ENCODE measurements at regions of chr5 and their contacts with region 1.

Region 1: DNA sequence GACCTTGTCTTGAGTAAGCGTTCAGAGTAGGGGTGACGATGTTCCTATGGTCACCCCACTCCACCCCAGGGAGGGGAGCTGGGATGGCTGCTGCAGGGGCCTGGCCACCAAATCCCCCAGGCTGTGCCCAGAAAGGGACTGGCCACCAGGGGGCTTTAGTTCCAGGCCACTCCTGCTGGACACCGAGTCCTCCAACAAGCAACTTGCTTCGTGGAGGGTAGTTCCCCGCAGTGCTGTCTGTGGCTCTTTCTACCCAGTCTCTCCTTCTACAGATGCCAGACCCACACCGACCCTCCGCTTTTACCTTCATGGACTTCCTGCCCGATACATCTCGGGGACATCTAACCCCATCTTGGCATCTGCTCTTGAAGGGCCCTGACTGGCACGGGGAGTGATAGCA is 35.7 kb upstream of the GABRP start:
- DNase-seq: no peak
- H3K4me3 ChIP-seq: no peak overlapping the region
- H3K27ac ChIP-seq: no peak overlapping the region
- H3K4me1 ChIP-seq: peaks cover 6% of the 10 kb centered on the region
- H3K27me3 ChIP-seq: peaks cover 4% of the 10 kb centered on the region
- CTCF ChIP-seq: no peak

Region 2: GRCh38 chr5:170791325-170791954 is 43.6 kb after region 1 on chr5:
- intact Hi-C with region 1: loop called (anchors 2 kb)
- DNase-seq: peak; percentile 70
- H3K4me3 ChIP-seq: no peak overlapping the region
- H3K27ac ChIP-seq: no peak overlapping the region
- H3K4me1 ChIP-seq: no peaks in the 10 kb centered on the region
- H3K27me3 ChIP-seq: no peaks in the 10 kb centered on the region
- CTCF ChIP-seq: peak; percentile 24

Region 3: GRCh38 chr5:171336521-171337209 is 588.8 kb after region 1 on chr5:
- intact Hi-C with region 1: loop called (anchors 5 kb)
- DNase-seq: no peak
- H3K4me3 ChIP-seq: peak overlapping the region; percentile 34
- H3K27ac ChIP-seq: no peak overlapping the region
- H3K4me1 ChIP-seq: no peaks in the 10 kb centered on the region
- H3K27me3 ChIP-seq: peaks cover 9% of the 10 kb centered on the region
- CTCF ChIP-seq: peak; percentile 33

Measured in colonic mucosa (tissue), 4 donors.